ENCODE measurements at regions of chr18 and their contacts with region 1.

Region 1: DNA sequence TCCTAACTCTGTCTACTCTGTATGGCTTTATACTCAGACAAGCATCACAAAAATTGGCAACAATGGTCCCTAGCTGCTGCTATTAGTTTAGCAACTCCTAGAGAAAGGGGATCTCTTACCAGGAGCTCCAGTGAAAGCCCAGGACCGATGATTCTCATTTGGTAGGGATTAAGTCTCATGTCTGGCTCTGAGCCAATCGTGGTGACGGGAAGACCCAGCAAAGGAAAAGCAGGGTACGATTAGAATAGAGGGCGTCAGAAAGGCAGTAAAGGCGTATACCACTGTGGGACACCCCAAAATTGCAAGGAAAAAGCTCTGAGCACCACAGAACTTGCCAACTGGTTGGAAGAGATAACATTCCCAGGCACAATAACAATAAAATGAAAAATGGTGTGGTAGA is 129.5 kb downstream of the MTCL1 start:
- DNase-seq: no peak
- ATAC-seq: no peak
- H3K4me3 ChIP-seq: no peak overlapping the region
- H3K27ac ChIP-seq: no peak overlapping the region
- H3K4me1 ChIP-seq: peaks cover 0 to 18% (median 0%) of the 10 kb centered on the region in 9 donors
- H3K27me3 ChIP-seq: no peaks in the 10 kb centered on the region
- CTCF ChIP-seq: no peak

Region 2: DNA sequence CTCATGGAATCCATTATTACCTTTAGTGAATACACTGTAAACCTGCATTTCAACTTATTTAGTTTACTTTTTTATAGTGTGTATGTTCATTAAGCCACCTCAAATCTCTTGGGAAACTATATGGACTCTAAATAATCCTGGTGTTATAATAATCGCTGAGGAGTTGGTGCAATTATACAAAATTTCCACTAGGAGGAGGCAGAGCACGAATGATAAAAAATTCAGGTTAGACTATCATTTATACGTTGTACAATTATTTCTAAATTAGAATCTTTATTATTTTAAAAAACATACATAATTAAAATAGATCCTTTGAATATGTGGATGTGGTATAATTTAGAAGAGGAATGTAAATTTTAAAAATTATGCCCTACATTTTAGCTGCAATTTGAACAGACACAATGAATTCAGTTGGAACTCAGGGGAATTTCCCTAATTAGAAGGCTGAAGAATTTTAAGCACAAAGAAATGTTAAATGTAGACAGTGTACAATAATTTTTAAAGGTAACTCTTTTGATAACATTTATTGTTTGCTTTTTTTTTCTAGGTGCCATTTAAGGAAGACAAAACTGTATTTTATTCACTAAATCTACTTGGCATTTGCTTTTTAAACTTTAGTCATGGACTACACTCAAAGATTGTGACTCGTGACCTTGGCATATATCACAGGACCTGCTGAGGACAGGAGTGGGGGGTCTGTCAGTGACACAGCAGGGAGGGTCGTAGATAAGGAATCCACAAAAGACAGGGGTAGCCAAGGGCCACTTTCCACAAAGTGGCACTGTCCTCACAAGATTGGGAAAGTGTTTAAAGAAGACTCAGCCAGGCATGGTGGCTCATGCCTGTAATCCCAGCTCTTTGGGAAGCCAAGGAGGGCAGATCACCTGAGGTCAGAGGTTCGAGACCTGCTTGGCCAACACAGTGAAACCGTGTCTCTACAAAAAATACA is 180.1 kb before region 1 on chr18:
- intact Hi-C with region 1: no loop called
- DNase-seq: no peak
- ATAC-seq: no peak
- H3K4me3 ChIP-seq: no peak overlapping the region
- H3K27ac ChIP-seq: no peak overlapping the region
- H3K4me1 ChIP-seq: no peaks in the 10 kb centered on the region
- H3K27me3 ChIP-seq: peaks cover 0 to 14% (median 4%) of the 10 kb centered on the region in 7 donors
- CTCF ChIP-seq: peak; percentile 55 to 86 (median 77)

Region 3: GRCh38 chr18:8780227-8780626 is 54.7 kb before region 1 on chr18:
- intact Hi-C with region 1: loop called in 1 of 10 experiments (anchors 5 kb)
- DNase-seq: no peak
- ATAC-seq: no peak
- H3K4me3 ChIP-seq: no peak overlapping the region
- H3K27ac ChIP-seq: no peak overlapping the region
- H3K4me1 ChIP-seq: no peaks in the 10 kb centered on the region
- H3K27me3 ChIP-seq: no peaks in the 10 kb centered on the region
- CTCF ChIP-seq: no peak

Measured in heart right ventricle (tissue), 16 donors.